ENCODE measurements at regions of chr1 and their contacts with region 1.

Region 1: GRCh38 chr1:56516539-56517252 is 62.7 kb downstream of the PLPP3 start:
- DNase-seq: peak; percentile 50
- H3K4me3 ChIP-seq: no peak overlapping the region
- H3K27ac ChIP-seq: no peak overlapping the region
- H3K4me1 ChIP-seq: peaks cover 22% of the 10 kb centered on the region
- H3K27me3 ChIP-seq: no peaks in the 10 kb centered on the region
- CTCF ChIP-seq: no peak
- POLR2A ChIP-seq: no peak

Region 2: GRCh38 chr1:56477164-56478111 is 39.3 kb before region 1 on chr1:
- CTCF ChIA-PET with region 1: no interaction called
- POLR2A ChIA-PET with region 1: interaction called, 14 read pairs
- dilution Hi-C with region 1: no loop called
- intact Hi-C with region 1: no loop called
- DNase-seq: peak; percentile 25
- H3K4me3 ChIP-seq: peak overlapping the region; percentile 3 to 46 (median 25)
- H3K27ac ChIP-seq: no peak overlapping the region
- H3K4me1 ChIP-seq: peaks cover 6% of the 10 kb centered on the region
- H3K27me3 ChIP-seq: no peaks in the 10 kb centered on the region
- CTCF ChIP-seq: no peak
- POLR2A ChIP-seq: no peak